ENCODE measurements at regions of chr19 and their contacts with region 1.

Region 1: GRCh38 chr19:14890643-14891379 is 4.9 kb upstream of the OR7A17 start:
- DNase-seq: no peak
- ATAC-seq: no peak
- H3K4me3 Mint-ChIP-seq: no peak overlapping the region
- H3K27ac Mint-ChIP-seq: no peak overlapping the region
- H3K4me1 Mint-ChIP-seq: peaks cover 6% of the 10 kb centered on the region
- H3K27me3 Mint-ChIP-seq: peaks cover 17% of the 10 kb centered on the region

Region 2: GRCh38 chr19:14571695-14572490 is 318.9 kb before region 1 on chr19 and contains the start of gene NDUFB7:
- CTCF ChIA-PET with region 1: no interaction called
- POLR2A ChIA-PET with region 1: no interaction called
- intact Hi-C with region 1: loop called (anchors 2 to 5 kb)
- DNase-seq: peak; percentile 95
- ATAC-seq: peak; percentile 95
- H3K4me3 Mint-ChIP-seq: peak within 1 kb of the TSS; percentile 95
- H3K27ac Mint-ChIP-seq: peak within 1 kb of the TSS; percentile 92
- H3K4me1 Mint-ChIP-seq: peaks cover 36% of the 10 kb centered on the region
- H3K27me3 Mint-ChIP-seq: no peaks in the 10 kb centered on the region
- total RNA-seq, gene NDUFB7: 112 to 121 TPM

Region 3: GRCh38 chr19:14786421-14786851 is 104.4 kb before region 1 on chr19:
- CTCF ChIA-PET with region 1: interaction called, 4 read pairs
- POLR2A ChIA-PET with region 1: no interaction called
- intact Hi-C with region 1: loop called (anchors 1 to 2 kb)
- DNase-seq: peak; percentile 63
- ATAC-seq: no peak
- H3K4me3 Mint-ChIP-seq: no peak overlapping the region
- H3K27ac Mint-ChIP-seq: no peak overlapping the region
- H3K4me1 Mint-ChIP-seq: peaks cover 20% of the 10 kb centered on the region
- H3K27me3 Mint-ChIP-seq: peaks cover 9% of the 10 kb centered on the region